Ascending aorta (tissue), 2 donors: ENCODE measurements at regions of chr7 and their contacts with region 1.

Region 1: GRCh38 chr7:136405931-136406777 is 429.0 kb upstream of the MTPN start:
- DNase-seq: no peak
- H3K4me3 ChIP-seq: no peak overlapping the region
- H3K27ac ChIP-seq: no peak overlapping the region
- H3K4me1 ChIP-seq: no peaks in the 10 kb centered on the region
- H3K27me3 ChIP-seq: no peaks in the 10 kb centered on the region
- CTCF ChIP-seq: peak in 2 of 3 experiments; percentile 42 to 60

Region 2: DNA sequence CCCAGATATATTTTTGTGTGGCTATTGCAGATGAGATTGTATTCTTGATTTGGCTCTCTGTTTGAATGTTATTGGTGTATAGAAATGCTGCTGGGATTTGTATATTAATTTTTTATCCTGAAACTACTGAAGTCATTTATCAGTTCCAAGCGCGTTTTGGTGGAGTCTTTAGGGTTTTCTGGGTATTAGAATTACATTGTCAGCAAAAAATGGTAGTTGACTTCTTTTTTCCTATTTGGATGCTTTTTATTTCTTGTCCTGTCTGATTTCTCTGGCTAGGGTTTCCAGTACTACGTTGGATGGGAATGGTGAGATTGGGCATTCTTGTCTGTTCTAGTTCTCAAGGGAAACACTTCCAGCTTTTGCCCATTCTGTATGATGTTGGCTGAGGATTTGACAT is 46.8 kb after region 1 on chr7:
- intact Hi-C with region 1: no loop called
- DNase-seq: no peak
- H3K4me3 ChIP-seq: no peak overlapping the region
- H3K27ac ChIP-seq: no peak overlapping the region
- H3K4me1 ChIP-seq: no peaks in the 10 kb centered on the region
- H3K27me3 ChIP-seq: no peaks in the 10 kb centered on the region
- CTCF ChIP-seq: no peak

Region 3: GRCh38 chr7:136470179-136470578 is 64.0 kb after region 1 on chr7:
- intact Hi-C with region 1: no loop called
- DNase-seq: no peak
- H3K4me3 ChIP-seq: no peak overlapping the region
- H3K27ac ChIP-seq: no peak overlapping the region
- H3K4me1 ChIP-seq: no peaks in the 10 kb centered on the region
- H3K27me3 ChIP-seq: no peaks in the 10 kb centered on the region
- CTCF ChIP-seq: no peak

Region 4: GRCh38 chr7:137592232-137592896 is 1186.2 kb after region 1 on chr7:
- intact Hi-C with region 1: loop called (anchors 5 kb)
- DNase-seq: peak in 1 of 2 donors; percentile 70
- H3K4me3 ChIP-seq: no peak overlapping the region
- H3K27ac ChIP-seq: peak overlapping the region in 1 of 2 donors; percentile 21
- H3K4me1 ChIP-seq: peaks cover 0 to 3% of the 10 kb centered on the region in 2 donors
- H3K27me3 ChIP-seq: no peaks in the 10 kb centered on the region
- CTCF ChIP-seq: peak; percentile 37 to 74 (median 60)